ENCODE measurements at regions of chr1 and their contacts with region 1.

Region 1: GRCh38 chr1:70410604-70411359 is at the start of gene CTH:
- DNase-seq: peak; percentile 95
- ATAC-seq: peak; percentile 100
- H3K4me3 ChIP-seq: peak within 1 kb of the TSS; percentile 49
- H3K27ac ChIP-seq: peak within 1 kb of the TSS; percentile 58
- H3K4me1 ChIP-seq: no peaks in the 10 kb centered on the region
- H3K27me3 ChIP-seq: 0 out of 2 replicates have a peak, but pooled peaks cover under 1% of the 10 kb centered on the region
- CTCF ChIP-seq: no peak
- POLR2A ChIP-seq: peak; percentile 94
- RAD21 ChIP-seq: no peak
- total RNA-seq, gene CTH: 2.5 and 2.7 TPM in 2 replicates

Region 2: DNA sequence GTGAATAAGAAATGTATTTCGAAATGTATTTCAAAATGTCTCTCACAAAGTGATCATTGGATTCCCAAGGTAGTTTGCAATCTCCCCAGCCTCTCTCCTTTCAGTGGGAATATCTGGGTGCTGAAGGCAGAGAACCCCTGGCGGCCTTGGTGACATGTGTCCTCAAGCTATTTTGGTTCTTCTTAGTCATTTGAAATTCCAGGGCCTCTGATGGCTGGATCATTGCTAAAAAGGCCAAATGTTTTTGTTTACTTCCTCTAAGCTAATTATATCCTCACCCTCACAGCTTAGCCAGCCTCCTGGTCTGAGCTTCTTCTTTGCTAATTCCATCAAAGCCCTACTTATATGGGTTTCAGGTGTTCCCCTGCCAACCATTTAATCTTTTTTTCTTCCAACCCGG is 276.6 kb before region 1 on chr1:
- CTCF ChIA-PET with region 1: no interaction called
- POLR2A ChIA-PET with region 1: no interaction called
- dilution Hi-C with region 1: no loop called
- in situ Hi-C with region 1: no loop called
- intact Hi-C with region 1: loop called (anchors 5 kb)
- DNase-seq: no peak
- ATAC-seq: no peak
- H3K4me3 ChIP-seq: no peak overlapping the region
- H3K27ac ChIP-seq: no peak overlapping the region
- H3K4me1 ChIP-seq: no peaks in the 10 kb centered on the region
- H3K27me3 ChIP-seq: no peaks in the 10 kb centered on the region; the same call in 1 of the 2 replicates
- CTCF ChIP-seq: no peak
- POLR2A ChIP-seq: no peak
- RAD21 ChIP-seq: no peak

Region 3: GRCh38 chr1:70195342-70195741 is 215.4 kb before region 1 on chr1:
- CTCF ChIA-PET with region 1: no interaction called
- POLR2A ChIA-PET with region 1: no interaction called
- dilution Hi-C with region 1: no loop called
- in situ Hi-C with region 1: no loop called
- intact Hi-C with region 1: no loop called
- DNase-seq: no peak
- ATAC-seq: no peak
- H3K4me3 ChIP-seq: no peak overlapping the region
- H3K27ac ChIP-seq: no peak overlapping the region
- H3K4me1 ChIP-seq: no peaks in the 10 kb centered on the region
- H3K27me3 ChIP-seq: no peaks in the 10 kb centered on the region
- CTCF ChIP-seq: no peak
- POLR2A ChIP-seq: no peak
- RAD21 ChIP-seq: no peak

Region 4: DNA sequence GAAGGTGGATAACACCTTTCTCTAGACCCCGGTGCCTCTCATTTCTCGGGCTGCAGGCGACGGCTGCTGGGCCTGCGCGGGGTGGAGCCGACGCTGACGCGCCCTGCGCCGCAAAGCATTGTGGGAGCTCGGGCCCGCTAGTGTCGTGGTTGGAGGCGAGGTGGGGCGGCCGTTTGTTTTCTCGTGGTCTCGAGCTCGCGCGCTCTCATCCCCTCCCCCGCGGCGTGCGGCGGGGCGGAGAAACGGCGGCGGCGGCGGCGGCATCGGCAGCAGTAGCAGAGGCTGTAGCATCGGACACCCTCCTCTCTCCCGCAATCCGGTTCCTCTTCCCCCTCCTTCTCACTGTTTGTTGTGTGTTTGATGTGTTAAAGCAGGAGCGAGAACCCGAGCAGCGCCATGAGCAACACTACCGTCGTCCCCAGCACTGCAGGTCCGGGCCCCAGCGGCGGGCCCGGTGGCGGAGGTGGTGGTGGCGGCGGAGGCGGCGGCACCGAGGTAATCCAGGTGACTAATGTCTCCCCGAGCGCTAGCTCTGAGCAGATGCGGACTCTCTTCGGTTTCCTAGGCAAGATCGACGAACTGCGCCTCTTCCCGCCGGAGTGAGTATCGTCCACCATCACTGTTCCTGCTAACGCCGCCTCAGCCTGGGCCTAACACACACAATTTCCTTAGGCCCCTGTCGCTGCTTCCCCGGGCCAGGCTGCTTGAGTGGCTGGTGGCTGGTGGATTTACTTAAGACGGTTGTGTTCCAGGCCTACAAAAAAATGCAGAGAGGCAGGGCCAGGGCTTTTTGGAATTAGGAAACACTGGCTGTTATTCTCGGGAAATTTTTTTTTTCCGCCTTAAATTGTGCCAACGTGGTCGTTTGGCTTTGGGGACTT is 189.3 kb before region 1 on chr1 and contains the start of gene SRSF11:
- CTCF ChIA-PET with region 1: no interaction called
- POLR2A ChIA-PET with region 1: no interaction called
- dilution Hi-C with region 1: no loop called
- in situ Hi-C with region 1: no loop called
- intact Hi-C with region 1: loop called (anchors 2 kb)
- DNase-seq: peak; percentile 91
- ATAC-seq: peak; percentile 99
- H3K4me3 ChIP-seq: peak within 1 kb of the TSS; percentile 97
- H3K27ac ChIP-seq: peak within 1 kb of the TSS; percentile 98
- H3K4me1 ChIP-seq: peaks cover 2% of the 10 kb centered on the region
- H3K27me3 ChIP-seq: no peaks in the 10 kb centered on the region
- CTCF ChIP-seq: no peak
- POLR2A ChIP-seq: peak; percentile 76
- RAD21 ChIP-seq: no peak
- total RNA-seq, gene SRSF11: 94.5 and 116 TPM in 2 replicates

Region 5: DNA sequence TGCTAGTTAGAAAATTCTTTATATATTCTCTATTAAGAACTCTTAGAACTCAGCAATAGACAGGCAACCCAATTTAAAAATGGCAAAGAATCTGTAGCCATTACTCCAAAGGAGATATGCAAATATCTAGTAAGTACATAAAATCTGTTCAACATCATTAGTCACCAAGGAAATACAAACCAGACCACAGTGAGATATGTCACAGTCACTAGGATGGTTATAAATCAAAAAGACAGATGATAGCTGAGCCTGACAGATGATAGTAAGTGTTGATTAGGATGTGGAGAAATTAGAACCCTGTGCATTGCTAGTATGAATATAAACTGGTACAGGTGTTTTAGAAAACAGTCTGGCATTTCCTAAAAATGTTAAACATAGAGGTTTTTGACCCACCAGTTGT is 163.0 kb before region 1 on chr1:
- CTCF ChIA-PET with region 1: no interaction called
- POLR2A ChIA-PET with region 1: no interaction called
- dilution Hi-C with region 1: no loop called
- in situ Hi-C with region 1: no loop called
- intact Hi-C with region 1: loop called (anchors 1 kb)
- DNase-seq: no peak
- ATAC-seq: no peak
- H3K4me3 ChIP-seq: no peak overlapping the region
- H3K27ac ChIP-seq: no peak overlapping the region
- H3K4me1 ChIP-seq: no peaks in the 10 kb centered on the region
- H3K27me3 ChIP-seq: no peaks in the 10 kb centered on the region
- CTCF ChIP-seq: no peak
- POLR2A ChIP-seq: no peak
- RAD21 ChIP-seq: no peak

Region 6: DNA sequence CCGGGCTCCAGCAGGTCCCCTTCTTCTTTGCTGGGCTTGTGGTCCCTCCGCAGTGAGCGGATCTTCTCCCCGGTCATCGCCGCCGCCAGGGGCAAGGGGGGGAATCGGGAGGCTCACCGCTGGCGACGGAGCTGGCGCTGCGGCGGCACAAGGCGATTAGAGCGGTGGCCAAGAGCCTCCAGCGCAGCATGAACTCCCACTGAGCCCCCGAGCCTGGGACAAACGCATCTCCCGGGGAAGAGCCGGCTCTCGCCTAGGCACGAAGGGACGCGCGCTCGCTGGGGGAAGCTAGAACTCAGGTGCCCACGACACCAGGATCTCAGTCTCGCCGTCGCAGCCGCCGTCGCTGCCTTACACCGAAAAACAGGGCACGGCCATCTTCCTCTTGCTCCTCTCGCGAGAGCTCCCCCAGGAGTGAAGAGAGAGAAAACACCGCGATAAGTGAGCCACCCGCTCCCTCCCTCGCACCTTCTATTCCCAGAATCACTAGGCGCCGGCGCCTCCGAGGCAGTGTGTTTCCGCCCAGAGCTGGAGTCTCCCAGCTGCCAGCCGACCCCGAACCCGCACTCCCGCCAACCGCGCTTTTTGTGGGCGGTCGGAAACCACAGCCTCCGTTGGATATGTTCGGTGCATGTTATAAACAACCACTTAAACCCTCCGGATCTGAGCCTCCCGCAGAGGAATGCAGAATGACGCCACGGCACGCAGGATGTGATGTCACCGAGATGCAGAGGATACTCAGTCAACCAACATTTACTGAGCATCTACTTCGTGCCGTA is 56.3 kb before region 1 on chr1 and contains the start of gene ANKRD13C:
- CTCF ChIA-PET with region 1: no interaction called
- POLR2A ChIA-PET with region 1: interaction called, 4 read pairs
- dilution Hi-C with region 1: no loop called
- in situ Hi-C with region 1: loop called (anchors 5 kb)
- intact Hi-C with region 1: loop called (anchors 1 kb)
- DNase-seq: peak; percentile 96
- ATAC-seq: peak; percentile 95
- H3K4me3 ChIP-seq: peak within 1 kb of the TSS; percentile 78
- H3K27ac ChIP-seq: peak within 1 kb of the TSS; percentile 88
- H3K4me1 ChIP-seq: no peaks in the 10 kb centered on the region
- H3K27me3 ChIP-seq: no peaks in the 10 kb centered on the region
- CTCF ChIP-seq: 0 out of 2 replicates have a peak, but pooled peaks have one; percentile 6
- POLR2A ChIP-seq: peak; percentile 93
- RAD21 ChIP-seq: 0 out of 2 replicates have a peak, but pooled peaks have one; percentile 4
- total RNA-seq, gene ANKRD13C: 10.9 and 18.9 TPM in 2 replicates

Region 7: DNA sequence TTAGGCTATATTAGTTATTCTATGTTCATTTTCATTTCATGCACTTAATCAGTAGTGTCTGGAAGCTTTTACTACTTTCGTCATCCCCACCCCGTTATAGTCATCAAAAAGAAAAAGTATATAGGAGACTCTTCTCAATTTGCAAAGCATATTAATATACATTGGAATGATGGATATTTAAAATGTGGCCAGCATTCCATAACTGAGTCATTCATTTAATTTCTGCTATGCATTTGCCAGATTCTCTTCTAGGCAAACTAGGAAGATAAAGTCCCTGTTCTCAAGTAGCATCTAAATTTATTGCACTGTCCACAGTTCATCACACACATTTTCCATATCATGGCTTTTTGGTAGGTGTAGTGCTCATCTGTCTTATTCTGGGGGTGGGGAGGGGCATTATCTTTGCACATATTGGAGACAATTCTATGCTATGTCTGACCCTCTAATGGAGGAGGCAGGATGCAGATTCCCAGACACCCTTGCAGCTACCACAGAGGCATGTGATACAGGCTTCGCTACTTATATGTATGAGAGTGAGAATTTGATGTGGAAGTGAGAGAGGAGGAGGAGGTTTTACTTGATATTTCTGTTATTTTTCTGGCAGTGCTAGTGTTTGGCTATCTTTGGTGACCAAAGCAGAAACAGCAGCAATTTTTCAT is 126.1 kb after region 1 on chr1:
- CTCF ChIA-PET with region 1: no interaction called
- POLR2A ChIA-PET with region 1: no interaction called
- dilution Hi-C with region 1: no loop called
- in situ Hi-C with region 1: no loop called
- intact Hi-C with region 1: no loop called
- DNase-seq: no peak
- ATAC-seq: no peak
- H3K4me3 ChIP-seq: no peak overlapping the region
- H3K27ac ChIP-seq: no peak overlapping the region
- H3K4me1 ChIP-seq: no peaks in the 10 kb centered on the region
- H3K27me3 ChIP-seq: no peaks in the 10 kb centered on the region
- CTCF ChIP-seq: no peak
- POLR2A ChIP-seq: no peak
- RAD21 ChIP-seq: no peak

Region 8: DNA sequence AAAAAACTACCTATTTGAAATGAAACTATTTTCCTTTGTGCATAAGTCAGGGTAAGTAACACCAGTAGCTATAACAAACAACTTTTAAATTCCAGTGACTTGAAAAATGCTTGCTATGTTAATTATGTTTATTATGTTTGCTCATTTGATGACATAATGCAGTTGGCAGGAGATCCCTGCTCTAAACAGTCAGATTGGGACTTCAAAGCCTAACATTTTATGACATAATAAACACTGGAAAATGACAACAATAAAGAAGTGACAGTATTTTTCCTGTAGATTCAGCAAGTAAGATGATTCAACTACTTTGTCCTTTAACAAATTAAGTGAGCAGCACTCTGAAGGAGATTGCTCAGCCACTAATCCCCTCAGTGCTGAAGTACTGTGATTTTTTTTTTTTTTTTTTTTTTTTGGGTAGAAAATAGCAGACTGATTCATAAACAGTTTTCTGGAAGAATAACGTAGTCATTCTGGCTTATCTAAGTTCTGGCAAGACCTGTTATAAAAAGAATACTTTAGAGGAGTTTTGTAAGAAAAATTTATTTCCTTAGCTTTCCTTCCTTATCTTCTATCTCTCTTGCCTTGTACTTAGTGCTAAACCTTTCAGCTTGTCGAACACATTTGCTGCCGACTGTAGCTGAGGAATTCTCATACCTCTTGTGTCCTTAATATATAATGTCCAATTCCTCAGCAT is 429.6 kb after region 1 on chr1:
- CTCF ChIA-PET with region 1: no interaction called
- POLR2A ChIA-PET with region 1: no interaction called
- dilution Hi-C with region 1: no loop called
- in situ Hi-C with region 1: no loop called
- intact Hi-C with region 1: no loop called
- DNase-seq: no peak
- ATAC-seq: no peak
- H3K4me3 ChIP-seq: no peak overlapping the region
- H3K27ac ChIP-seq: no peak overlapping the region
- H3K4me1 ChIP-seq: no peaks in the 10 kb centered on the region
- H3K27me3 ChIP-seq: no peaks in the 10 kb centered on the region
- CTCF ChIP-seq: no peak
- POLR2A ChIP-seq: no peak
- RAD21 ChIP-seq: no peak

Measured in IMR-90 (cell line).